Activated naive CD4-positive, alpha-beta T cell treated with anti-CD3 and anti-CD28 coated beads for 36 hours (primary cell): ENCODE measurements at regions of chr10 and their contacts with region 1.

Region 1: DNA sequence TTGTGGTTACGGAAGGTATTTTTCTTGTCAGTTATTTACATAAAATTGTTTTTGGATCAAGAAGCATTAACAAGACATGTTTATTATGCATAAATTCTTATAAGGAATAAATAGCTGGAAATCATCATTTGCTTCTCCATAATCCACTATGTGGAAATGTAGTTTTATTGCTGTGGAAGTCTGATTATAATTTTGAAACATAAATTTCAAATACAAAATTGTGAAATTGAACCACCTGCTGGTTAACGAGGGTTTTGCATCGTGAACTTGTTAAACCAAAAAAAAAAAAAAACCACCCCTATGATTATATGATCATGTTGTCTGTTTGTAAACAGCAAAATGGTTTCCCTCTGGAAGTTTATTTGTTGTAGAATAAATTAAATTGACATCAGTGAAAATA is 25.9 kb downstream of the ABRAXAS2 start:
- DNase-seq: peak; percentile 29
- H3K4me3 Mint-ChIP-seq: no peak overlapping the region
- H3K27ac Mint-ChIP-seq: no peak overlapping the region
- H3K4me1 Mint-ChIP-seq: no peaks in the 10 kb centered on the region
- H3K27me3 Mint-ChIP-seq: no peaks in the 10 kb centered on the region

Region 2: GRCh38 chr10:124049484-124049883 is 778.0 kb before region 1 on chr10:
- CTCF ChIA-PET with region 1: no interaction called
- intact Hi-C with region 1: no loop called
- DNase-seq: no peak
- H3K4me3 Mint-ChIP-seq: no peak overlapping the region
- H3K27ac Mint-ChIP-seq: no peak overlapping the region
- H3K4me1 Mint-ChIP-seq: no peaks in the 10 kb centered on the region
- H3K27me3 Mint-ChIP-seq: no peaks in the 10 kb centered on the region

Region 3: GRCh38 chr10:124632064-124632531 is 195.4 kb before region 1 on chr10:
- CTCF ChIA-PET with region 1: no interaction called
- intact Hi-C with region 1: loop called (anchors 1 kb)
- DNase-seq: peak; percentile 52
- H3K4me3 Mint-ChIP-seq: no peak overlapping the region
- H3K27ac Mint-ChIP-seq: no peak overlapping the region
- H3K4me1 Mint-ChIP-seq: peaks cover 32% of the 10 kb centered on the region
- H3K27me3 Mint-ChIP-seq: no peaks in the 10 kb centered on the region

Region 4: DNA sequence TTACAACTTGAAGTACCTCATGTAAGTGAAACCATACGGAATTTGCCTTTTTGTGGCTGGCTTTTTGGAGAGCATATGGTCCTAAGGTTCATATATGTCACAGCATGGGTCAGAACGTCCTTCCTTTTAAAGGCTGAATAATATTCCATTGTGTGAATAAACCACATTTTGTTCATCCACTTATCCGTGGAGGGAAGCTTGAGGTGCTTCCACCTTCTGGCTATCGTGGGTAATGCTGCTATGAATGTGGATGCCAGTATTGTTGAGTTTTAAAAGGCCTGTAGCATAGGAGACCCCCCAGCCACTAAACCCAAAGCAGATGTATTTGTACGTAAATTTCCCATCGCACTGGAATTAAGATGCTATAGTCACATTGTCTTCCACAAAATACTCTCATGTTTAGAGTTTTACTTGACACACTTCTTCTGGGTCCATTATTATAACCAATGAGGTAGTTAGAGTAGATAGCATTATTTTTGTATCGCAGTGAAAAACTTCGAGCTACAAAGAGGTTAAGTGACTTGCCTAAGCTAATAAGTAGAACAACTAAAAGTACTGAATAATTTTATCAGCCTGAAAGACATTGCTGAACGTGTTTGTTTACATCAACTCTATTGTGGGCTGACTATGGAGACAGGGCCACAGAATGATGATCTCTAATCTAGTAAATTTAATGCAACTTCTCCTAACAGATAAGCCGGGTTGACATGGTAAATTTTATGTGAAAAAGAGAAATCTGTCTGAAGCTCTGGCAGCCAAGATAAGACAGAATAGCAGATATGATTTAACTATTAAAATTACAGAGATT is 515.8 kb after region 1 on chr10:
- CTCF ChIA-PET with region 1: no interaction called
- intact Hi-C with region 1: no loop called
- DNase-seq: peak; percentile 11
- H3K4me3 Mint-ChIP-seq: no peak overlapping the region
- H3K27ac Mint-ChIP-seq: no peak overlapping the region
- H3K4me1 Mint-ChIP-seq: no peaks in the 10 kb centered on the region
- H3K27me3 Mint-ChIP-seq: peaks cover 7% of the 10 kb centered on the region